CD14-positive monocyte (primary cell): ENCODE measurements at regions of chr11 and their contacts with region 1.

Region 1: GRCh38 chr11:128172046-128172878 is 415.1 kb downstream of the ETS1 start:
- DNase-seq: peak; percentile 52 to 65 (median 64)
- H3K4me3 ChIP-seq: no peak overlapping the region
- H3K4me3 Mint-ChIP-seq: no peak overlapping the region
- H3K27ac ChIP-seq: no peak overlapping the region
- H3K27ac Mint-ChIP-seq: no peak overlapping the region
- H3K4me1 ChIP-seq: no peaks in the 10 kb centered on the region
- H3K4me1 Mint-ChIP-seq: no peaks in the 10 kb centered on the region
- H3K27me3 ChIP-seq: no peaks in the 10 kb centered on the region
- H3K27me3 Mint-ChIP-seq: peaks cover 0 to 1% (median 0%) of the 10 kb centered on the region in 3 donors
- CTCF ChIP-seq: peak; percentile 83

Region 2: GRCh38 chr11:128831174-128832120 is 659.2 kb after region 1 on chr11:
- intact Hi-C with region 1: loop called in 1 of 2 experiments (anchors 5 kb)
- DNase-seq: peak; percentile 65 to 74 (median 72)
- H3K4me3 ChIP-seq: peak overlapping the region; percentile 42 to 80 (median 66)
- H3K4me3 Mint-ChIP-seq: peak overlapping the region; percentile 69 to 72
- H3K27ac ChIP-seq: peak overlapping the region in 1 of 2 donors; percentile 5
- H3K27ac Mint-ChIP-seq: peak overlapping the region in 1 of 7 donors; percentile 56
- H3K4me1 ChIP-seq: peaks cover 16 to 17% of the 10 kb centered on the region in 2 donors
- H3K4me1 Mint-ChIP-seq: peaks cover 49% of the 10 kb centered on the region
- H3K27me3 ChIP-seq: no peaks in the 10 kb centered on the region
- H3K27me3 Mint-ChIP-seq: peaks cover 0 to 2% (median 0%) of the 10 kb centered on the region in 3 donors
- CTCF ChIP-seq: peak; percentile 94

Region 3: DNA sequence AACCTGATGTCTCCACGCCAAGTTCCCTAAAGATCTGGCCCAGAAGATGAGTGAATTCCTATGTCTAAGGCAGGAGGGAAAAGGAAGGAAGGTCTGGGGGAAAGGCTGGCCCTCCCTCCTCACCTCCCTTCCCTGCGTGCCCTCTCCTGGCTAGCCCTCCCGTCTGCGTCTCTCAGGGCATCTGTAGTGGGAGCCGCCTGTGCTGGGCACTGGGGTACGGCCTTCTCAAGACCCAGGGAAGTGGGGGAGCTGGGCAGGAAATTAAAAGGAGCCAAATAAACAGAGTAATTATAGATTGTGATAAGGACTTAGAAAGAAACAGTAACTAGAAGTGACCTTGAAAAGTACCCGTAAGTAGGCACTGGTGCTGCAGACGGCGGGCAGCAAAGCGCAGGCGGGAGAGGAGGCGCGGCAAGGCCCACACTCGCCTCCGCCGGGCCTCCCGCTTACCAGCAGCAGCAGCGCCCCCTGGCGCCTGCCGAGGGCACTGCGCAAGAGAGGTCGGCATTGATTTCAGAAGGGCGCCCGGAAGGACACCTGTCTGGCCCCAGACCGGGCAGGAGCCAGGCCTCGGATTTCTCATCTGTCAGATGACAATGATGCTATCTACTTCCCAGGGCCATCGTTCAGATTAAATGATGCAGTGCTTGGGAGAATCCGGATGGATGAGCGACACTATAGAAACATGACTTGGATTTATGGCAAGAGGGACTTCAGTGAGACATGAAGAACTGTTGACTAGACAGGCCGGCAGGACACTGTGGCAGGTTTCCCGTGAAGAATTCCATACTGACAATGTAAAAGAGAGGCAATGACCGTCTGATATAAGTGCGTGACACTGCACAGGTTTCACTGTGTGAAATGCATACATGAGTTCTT is 687.5 kb after region 1 on chr11:
- intact Hi-C with region 1: loop called in 1 of 2 experiments (anchors 10 kb)
- DNase-seq: peak; percentile 48 to 64 (median 62)
- H3K4me3 ChIP-seq: no peak overlapping the region
- H3K4me3 Mint-ChIP-seq: no peak overlapping the region
- H3K27ac ChIP-seq: no peak overlapping the region
- H3K27ac Mint-ChIP-seq: no peak overlapping the region
- H3K4me1 ChIP-seq: peaks cover 0 to 2% of the 10 kb centered on the region in 2 donors
- H3K4me1 Mint-ChIP-seq: peaks cover 2% of the 10 kb centered on the region
- H3K27me3 ChIP-seq: peaks cover 0 to 2% of the 10 kb centered on the region in 2 donors
- H3K27me3 Mint-ChIP-seq: peaks cover 5 to 10% (median 9%) of the 10 kb centered on the region in 3 donors
- CTCF ChIP-seq: peak; percentile 99

Region 4: DNA sequence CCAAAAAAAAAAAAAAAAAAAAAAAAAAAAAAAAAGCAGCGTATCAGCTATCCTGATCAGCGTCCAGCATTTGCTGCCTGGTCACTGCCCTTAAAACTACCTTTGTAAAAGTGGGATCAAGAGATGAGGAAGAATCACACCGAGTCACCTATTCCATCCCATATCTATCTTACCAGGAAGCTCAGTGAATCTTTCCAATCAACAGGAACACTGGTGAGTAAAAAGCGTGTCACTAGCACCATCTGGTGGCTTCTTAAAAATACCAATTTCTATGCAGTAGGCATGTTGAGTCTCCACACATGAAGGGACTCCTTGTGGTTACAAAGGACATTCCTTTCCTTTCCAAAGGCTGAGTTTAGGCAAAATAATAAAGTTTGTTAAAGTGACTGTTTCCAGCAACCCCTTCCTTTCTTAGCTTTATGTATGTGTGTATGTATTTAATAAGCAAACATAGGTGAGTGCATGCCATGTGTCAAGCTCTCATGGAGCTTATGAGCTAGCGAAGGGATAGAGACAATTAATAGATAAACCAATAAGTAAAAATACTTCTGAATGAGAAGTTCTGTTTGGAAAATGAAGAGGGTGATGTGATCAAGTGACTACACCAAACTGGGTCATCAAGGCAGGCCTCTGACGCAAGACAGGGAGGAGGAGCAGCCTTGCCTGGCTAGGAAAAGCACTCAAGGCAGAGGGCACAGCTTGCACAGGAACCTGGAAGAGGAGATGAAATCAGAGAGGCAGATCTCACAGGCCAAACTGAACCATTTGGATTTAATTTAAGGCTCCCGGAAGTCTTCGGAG is 784.3 kb after region 1 on chr11:
- intact Hi-C with region 1: loop called in 1 of 2 experiments (anchors 10 kb)
- DNase-seq: peak; percentile 21 to 72 (median 47)
- H3K4me3 ChIP-seq: no peak overlapping the region
- H3K4me3 Mint-ChIP-seq: no peak overlapping the region
- H3K27ac ChIP-seq: no peak overlapping the region
- H3K27ac Mint-ChIP-seq: no peak overlapping the region
- H3K4me1 ChIP-seq: no peaks in the 10 kb centered on the region
- H3K4me1 Mint-ChIP-seq: peaks cover 2% of the 10 kb centered on the region
- H3K27me3 ChIP-seq: no peaks in the 10 kb centered on the region
- H3K27me3 Mint-ChIP-seq: peaks cover 0 to 9% (median 7%) of the 10 kb centered on the region in 3 donors
- CTCF ChIP-seq: peak; percentile 83